CD4-positive, alpha-beta T cell (primary cell): ENCODE measurements at regions of chr1 and their contacts with region 1.

Region 1: GRCh38 chr1:15820478-15820877 is 13.0 kb upstream of the UQCRHL start:
- DNase-seq: no peak
- ATAC-seq: no peak
- H3K4me3 ChIP-seq: no peak overlapping the region
- H3K4me3 Mint-ChIP-seq: no peak overlapping the region
- H3K27ac ChIP-seq: no peak overlapping the region
- H3K27ac Mint-ChIP-seq: no peak overlapping the region
- H3K4me1 ChIP-seq: peaks cover 5% of the 10 kb centered on the region
- H3K4me1 Mint-ChIP-seq: peaks cover 4% of the 10 kb centered on the region
- H3K27me3 ChIP-seq: no peaks in the 10 kb centered on the region
- H3K27me3 Mint-ChIP-seq: no peaks in the 10 kb centered on the region
- CTCF ChIP-seq: no peak

Region 2: DNA sequence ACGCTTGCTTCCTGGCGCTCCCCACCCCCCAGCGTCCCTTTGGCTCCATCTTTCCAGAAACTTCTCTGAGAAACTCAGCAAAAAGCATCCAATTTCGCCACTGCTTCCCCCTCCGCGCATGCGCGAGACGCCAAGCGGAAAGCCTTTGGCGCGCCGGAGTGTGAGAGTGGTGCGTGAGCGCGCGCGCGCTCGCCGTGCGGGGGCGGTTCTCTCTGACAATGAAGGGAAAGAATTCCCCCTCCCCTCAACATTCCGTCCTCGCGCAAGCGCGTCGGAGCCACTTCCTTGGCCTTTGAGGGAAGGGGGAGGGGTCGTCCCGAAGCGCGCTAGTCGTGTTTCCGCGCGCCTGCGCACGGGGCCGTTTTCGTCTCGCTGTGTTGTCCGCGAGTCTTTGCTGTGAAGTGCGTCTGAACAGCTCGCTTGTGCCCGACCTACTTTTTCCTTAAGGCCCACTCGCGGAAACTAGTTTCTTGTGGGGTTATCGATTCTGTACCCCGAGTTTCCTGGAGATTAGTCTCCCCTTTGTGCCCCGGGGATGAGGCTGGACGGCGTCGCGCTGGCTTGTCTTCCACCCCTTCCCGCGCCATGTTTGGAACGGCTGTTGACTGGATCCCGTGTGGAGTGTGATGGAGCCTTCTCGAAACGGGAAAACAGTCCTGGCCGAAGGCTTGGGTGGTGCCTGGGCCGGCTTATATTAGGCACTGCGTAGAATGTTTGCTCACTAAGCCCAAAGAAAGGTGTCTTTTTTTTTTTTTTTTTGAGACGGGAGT is 15.4 kb after region 1 on chr1:
- CTCF ChIA-PET with region 1: interaction called, 13 read pairs
- POLR2A ChIA-PET with region 1: interaction called, 20 read pairs
- intact Hi-C with region 1: loop called (anchors 1 to 2 kb)
- DNase-seq: peak; percentile 97 to 100 (median 99)
- ATAC-seq: peak; percentile 54
- H3K4me3 ChIP-seq: peak overlapping the region; percentile 70
- H3K4me3 Mint-ChIP-seq: peak overlapping the region; percentile 98
- H3K27ac ChIP-seq: peak overlapping the region; percentile 96 to 99
- H3K27ac Mint-ChIP-seq: peak overlapping the region; percentile 99
- H3K4me1 ChIP-seq: peaks cover 35% of the 10 kb centered on the region
- H3K4me1 Mint-ChIP-seq: peaks cover 26% of the 10 kb centered on the region
- H3K27me3 ChIP-seq: no peaks in the 10 kb centered on the region
- H3K27me3 Mint-ChIP-seq: no peaks in the 10 kb centered on the region
- CTCF ChIP-seq: no peak

Region 3: GRCh38 chr1:15876357-15877055 is 56.0 kb after region 1 on chr1:
- CTCF ChIA-PET with region 1: interaction called, 10 read pairs
- POLR2A ChIA-PET with region 1: no interaction called
- intact Hi-C with region 1: no loop called
- DNase-seq: peak in 1 of 14 experiments; percentile 31
- ATAC-seq: peak; percentile 43
- H3K4me3 ChIP-seq: no peak overlapping the region
- H3K4me3 Mint-ChIP-seq: no peak overlapping the region
- H3K27ac ChIP-seq: no peak overlapping the region
- H3K27ac Mint-ChIP-seq: no peak overlapping the region
- H3K4me1 ChIP-seq: peaks cover 10% of the 10 kb centered on the region
- H3K4me1 Mint-ChIP-seq: peaks cover 61% of the 10 kb centered on the region
- H3K27me3 ChIP-seq: no peaks in the 10 kb centered on the region
- H3K27me3 Mint-ChIP-seq: no peaks in the 10 kb centered on the region
- CTCF ChIP-seq: no peak

Region 4: GRCh38 chr1:15886611-15887167 is 66.2 kb after region 1 on chr1:
- CTCF ChIA-PET with region 1: no interaction called
- POLR2A ChIA-PET with region 1: no interaction called
- intact Hi-C with region 1: no loop called
- DNase-seq: no peak
- ATAC-seq: no peak
- H3K4me3 ChIP-seq: no peak overlapping the region
- H3K4me3 Mint-ChIP-seq: peak overlapping the region; percentile 52
- H3K27ac ChIP-seq: no peak overlapping the region
- H3K27ac Mint-ChIP-seq: peak overlapping the region; percentile 68
- H3K4me1 ChIP-seq: peaks cover 31% of the 10 kb centered on the region
- H3K4me1 Mint-ChIP-seq: peaks cover 61% of the 10 kb centered on the region
- H3K27me3 ChIP-seq: no peaks in the 10 kb centered on the region
- H3K27me3 Mint-ChIP-seq: no peaks in the 10 kb centered on the region
- CTCF ChIP-seq: no peak

Region 5: GRCh38 chr1:15902882-15903281 is 82.4 kb after region 1 on chr1:
- CTCF ChIA-PET with region 1: interaction called, 6 read pairs
- POLR2A ChIA-PET with region 1: interaction called, 4 read pairs
- intact Hi-C with region 1: loop called in 1 of 2 experiments (anchors 5 kb)
- DNase-seq: no peak
- ATAC-seq: no peak
- H3K4me3 ChIP-seq: no peak overlapping the region
- H3K4me3 Mint-ChIP-seq: no peak overlapping the region
- H3K27ac ChIP-seq: no peak overlapping the region
- H3K27ac Mint-ChIP-seq: peak overlapping the region; percentile 53
- H3K4me1 ChIP-seq: no peaks in the 10 kb centered on the region
- H3K4me1 Mint-ChIP-seq: peaks cover 34% of the 10 kb centered on the region
- H3K27me3 ChIP-seq: no peaks in the 10 kb centered on the region
- H3K27me3 Mint-ChIP-seq: no peaks in the 10 kb centered on the region
- CTCF ChIP-seq: no peak

Region 6: DNA sequence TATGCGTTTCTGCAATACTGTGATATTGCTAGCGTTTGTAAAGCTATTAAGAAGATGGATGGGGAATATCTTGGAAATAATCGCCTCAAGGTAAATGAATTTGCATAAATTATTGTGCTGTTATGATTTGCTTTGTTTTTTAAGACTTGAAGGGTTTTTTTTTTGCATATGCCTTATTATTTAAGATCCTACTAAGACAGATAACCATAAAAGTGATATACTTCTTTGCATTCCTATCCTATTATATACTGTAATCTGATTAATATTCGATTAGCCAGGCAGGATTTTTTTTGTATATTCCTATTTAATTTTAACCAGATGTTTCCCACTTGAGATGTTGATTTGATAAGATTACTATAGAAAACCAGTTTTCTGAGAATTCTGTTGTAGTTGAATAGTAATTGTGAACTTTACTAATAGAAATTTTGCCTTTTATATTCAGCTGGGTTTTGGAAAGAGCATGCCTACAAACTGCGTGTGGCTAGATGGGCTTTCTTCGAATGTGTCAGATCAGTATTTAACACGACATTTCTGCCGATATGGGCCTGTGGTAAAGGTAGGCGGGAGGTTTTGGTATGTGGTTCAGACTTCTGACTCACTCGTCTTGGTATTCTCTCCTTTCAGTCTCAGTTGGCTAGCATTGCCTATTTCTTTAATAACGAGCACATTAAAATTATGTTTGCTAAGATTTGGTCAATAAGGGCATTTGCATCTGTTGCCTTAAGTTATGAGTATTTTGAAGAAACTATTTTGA is 98.7 kb after region 1 on chr1:
- CTCF ChIA-PET with region 1: interaction called, 9 read pairs
- POLR2A ChIA-PET with region 1: no interaction called
- intact Hi-C with region 1: loop called in 1 of 2 experiments (anchors 5 kb)
- DNase-seq: peak in 9 of 14 experiments; percentile 14 to 71 (median 27)
- ATAC-seq: peak; percentile 84
- H3K4me3 ChIP-seq: no peak overlapping the region
- H3K4me3 Mint-ChIP-seq: no peak overlapping the region
- H3K27ac ChIP-seq: no peak overlapping the region
- H3K27ac Mint-ChIP-seq: peak overlapping the region; percentile 18
- H3K4me1 ChIP-seq: peaks cover 17% of the 10 kb centered on the region
- H3K4me1 Mint-ChIP-seq: peaks cover 30% of the 10 kb centered on the region
- H3K27me3 ChIP-seq: no peaks in the 10 kb centered on the region
- H3K27me3 Mint-ChIP-seq: no peaks in the 10 kb centered on the region
- CTCF ChIP-seq: no peak

Region 7: DNA sequence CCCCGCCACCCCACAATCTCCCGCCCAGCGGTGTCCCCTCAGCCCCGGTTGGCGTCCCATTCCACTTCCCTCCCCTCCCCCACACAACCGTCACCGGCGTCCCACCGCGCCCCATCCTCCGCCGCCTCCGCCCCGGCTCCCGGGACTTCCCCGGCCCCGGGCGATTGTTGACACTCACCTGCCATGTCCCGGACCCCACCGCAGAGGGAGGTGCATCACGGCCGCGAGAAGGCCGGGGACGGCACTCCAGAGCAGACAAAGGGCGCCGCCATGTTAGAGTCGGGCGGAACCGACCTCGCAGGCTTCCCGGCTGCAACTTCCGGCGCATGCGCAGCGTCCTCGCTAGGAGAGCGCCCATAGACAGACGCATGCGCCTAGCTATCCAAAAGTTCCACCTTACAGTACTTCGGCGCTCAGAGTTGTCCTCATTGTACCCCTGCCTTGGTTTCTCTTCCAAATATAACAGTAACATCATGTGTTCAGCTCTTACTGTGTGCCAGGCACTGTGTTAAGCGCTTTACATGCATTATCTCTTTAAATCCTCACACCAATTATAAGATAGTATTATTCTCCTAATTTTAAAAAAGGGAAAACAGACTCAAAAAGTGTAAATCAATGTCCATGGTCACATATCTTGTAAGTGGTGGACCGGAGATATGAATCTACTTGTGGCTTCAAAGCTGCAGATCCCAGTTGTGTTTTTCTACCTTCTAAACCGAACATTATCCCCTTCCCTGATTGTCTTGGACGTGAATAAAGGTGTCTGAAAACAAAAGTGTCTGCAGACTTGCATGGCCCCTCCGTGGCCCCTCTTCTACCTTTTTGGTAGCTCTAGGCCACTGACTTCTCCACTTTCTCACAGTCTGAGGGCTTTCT is 155.6 kb after region 1 on chr1 and contains the start of gene ZBTB17:
- CTCF ChIA-PET with region 1: interaction called, 10 read pairs
- POLR2A ChIA-PET with region 1: no interaction called
- intact Hi-C with region 1: no loop called
- DNase-seq: peak; percentile 91 to 99 (median 94)
- ATAC-seq: peak; percentile 92
- H3K4me3 ChIP-seq: peak within 1 kb of the TSS; percentile 91
- H3K4me3 Mint-ChIP-seq: peak within 1 kb of the TSS; percentile 99
- H3K27ac ChIP-seq: peak within 1 kb of the TSS; percentile 67 to 70
- H3K27ac Mint-ChIP-seq: peak within 1 kb of the TSS; percentile 92
- H3K4me1 ChIP-seq: peaks cover 37% of the 10 kb centered on the region
- H3K4me1 Mint-ChIP-seq: peaks cover 34% of the 10 kb centered on the region
- H3K27me3 ChIP-seq: no peaks in the 10 kb centered on the region
- H3K27me3 Mint-ChIP-seq: no peaks in the 10 kb centered on the region
- CTCF ChIP-seq: no peak
- total RNA-seq, gene ZBTB17: 70.2 to 78.1 TPM

Region 8: DNA sequence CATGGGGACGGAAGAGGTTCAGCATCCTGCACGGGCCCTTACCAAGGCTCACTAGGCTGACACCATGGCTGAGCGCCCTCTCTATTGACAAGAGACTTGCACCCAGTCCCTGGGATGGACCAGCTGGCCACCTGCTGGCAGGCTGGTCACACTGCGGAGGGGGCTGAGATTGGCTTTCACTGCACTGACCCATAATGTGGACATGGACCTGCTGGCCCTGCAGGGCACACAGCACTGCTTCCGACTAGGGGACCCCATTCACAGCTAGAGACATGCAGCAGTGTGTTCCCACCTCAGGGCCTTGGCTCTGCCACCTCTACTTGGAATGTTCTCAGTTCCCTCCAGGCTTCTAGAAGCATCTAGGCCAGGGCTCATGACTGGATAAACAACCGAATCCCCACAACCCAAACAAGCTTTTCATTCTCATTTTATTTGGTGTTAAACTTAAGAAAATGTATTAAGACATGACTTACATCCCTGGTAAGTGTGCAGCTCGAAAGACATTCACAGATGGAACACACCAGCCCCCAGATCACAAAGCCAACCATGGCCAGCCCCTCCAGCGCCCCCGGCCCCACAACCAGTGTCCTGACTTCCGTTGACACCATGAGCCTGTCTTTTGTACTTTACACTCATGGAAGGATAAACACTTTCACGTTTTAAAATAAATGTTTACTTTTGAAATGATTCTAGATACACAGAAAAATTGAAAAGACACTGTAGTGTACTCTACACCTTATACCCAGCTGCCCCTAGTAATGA is 174.3 kb after region 1 on chr1:
- CTCF ChIA-PET with region 1: interaction called, 6 read pairs
- POLR2A ChIA-PET with region 1: no interaction called
- intact Hi-C with region 1: loop called in 1 of 2 experiments (anchors 2 kb)
- DNase-seq: peak in 10 of 14 experiments; percentile 10 to 67 (median 24)
- ATAC-seq: peak; percentile 44
- H3K4me3 ChIP-seq: no peak overlapping the region
- H3K4me3 Mint-ChIP-seq: no peak overlapping the region
- H3K27ac ChIP-seq: no peak overlapping the region
- H3K27ac Mint-ChIP-seq: no peak overlapping the region
- H3K4me1 ChIP-seq: no peaks in the 10 kb centered on the region
- H3K4me1 Mint-ChIP-seq: no peaks in the 10 kb centered on the region
- H3K27me3 ChIP-seq: no peaks in the 10 kb centered on the region
- H3K27me3 Mint-ChIP-seq: no peaks in the 10 kb centered on the region
- CTCF ChIP-seq: peak; percentile 43